ENCODE measurements at regions of chr21 and their contacts with region 1.

Region 1: GRCh38 chr21:21163904-21164303 is 165.7 kb downstream of the NCAM2 start:
- DNase-seq: peak; percentile 38 to 48
- H3K4me3 ChIP-seq: no peak overlapping the region
- H3K4me3 Mint-ChIP-seq: no peak overlapping the region
- H3K27ac Mint-ChIP-seq: no peak overlapping the region
- H3K4me1 ChIP-seq: no peaks in the 10 kb centered on the region
- H3K4me1 Mint-ChIP-seq: no peaks in the 10 kb centered on the region
- H3K27me3 ChIP-seq: no peaks in the 10 kb centered on the region
- H3K27me3 Mint-ChIP-seq: no peaks in the 10 kb centered on the region
- CTCF ChIP-seq: peak; percentile 52 to 56

Region 2: GRCh38 chr21:20999659-21000058 is 164.2 kb before region 1 on chr21:
- CTCF ChIA-PET with region 1: no interaction called
- POLR2A ChIA-PET with region 1: no interaction called
- intact Hi-C with region 1: loop called (anchors 5 kb)
- DNase-seq: peak in 1 of 2 experiments; percentile 42
- H3K4me3 ChIP-seq: no peak overlapping the region
- H3K4me3 Mint-ChIP-seq: no peak overlapping the region
- H3K27ac Mint-ChIP-seq: no peak overlapping the region
- H3K4me1 ChIP-seq: no peaks in the 10 kb centered on the region
- H3K4me1 Mint-ChIP-seq: no peaks in the 10 kb centered on the region
- H3K27me3 ChIP-seq: no peaks in the 10 kb centered on the region
- H3K27me3 Mint-ChIP-seq: peaks cover 14% of the 10 kb centered on the region
- CTCF ChIP-seq: peak; percentile 61 to 63

Region 3: GRCh38 chr21:21688875-21689274 is 525.0 kb after region 1 on chr21:
- CTCF ChIA-PET with region 1: no interaction called
- POLR2A ChIA-PET with region 1: no interaction called
- intact Hi-C with region 1: loop called (anchors 2 kb)
- DNase-seq: peak; percentile 9 to 34
- H3K4me3 ChIP-seq: no peak overlapping the region
- H3K4me3 Mint-ChIP-seq: no peak overlapping the region
- H3K27ac Mint-ChIP-seq: no peak overlapping the region
- H3K4me1 ChIP-seq: no peaks in the 10 kb centered on the region
- H3K4me1 Mint-ChIP-seq: no peaks in the 10 kb centered on the region
- H3K27me3 ChIP-seq: no peaks in the 10 kb centered on the region
- H3K27me3 Mint-ChIP-seq: no peaks in the 10 kb centered on the region
- CTCF ChIP-seq: peak; percentile 21 to 23

Region 4: DNA sequence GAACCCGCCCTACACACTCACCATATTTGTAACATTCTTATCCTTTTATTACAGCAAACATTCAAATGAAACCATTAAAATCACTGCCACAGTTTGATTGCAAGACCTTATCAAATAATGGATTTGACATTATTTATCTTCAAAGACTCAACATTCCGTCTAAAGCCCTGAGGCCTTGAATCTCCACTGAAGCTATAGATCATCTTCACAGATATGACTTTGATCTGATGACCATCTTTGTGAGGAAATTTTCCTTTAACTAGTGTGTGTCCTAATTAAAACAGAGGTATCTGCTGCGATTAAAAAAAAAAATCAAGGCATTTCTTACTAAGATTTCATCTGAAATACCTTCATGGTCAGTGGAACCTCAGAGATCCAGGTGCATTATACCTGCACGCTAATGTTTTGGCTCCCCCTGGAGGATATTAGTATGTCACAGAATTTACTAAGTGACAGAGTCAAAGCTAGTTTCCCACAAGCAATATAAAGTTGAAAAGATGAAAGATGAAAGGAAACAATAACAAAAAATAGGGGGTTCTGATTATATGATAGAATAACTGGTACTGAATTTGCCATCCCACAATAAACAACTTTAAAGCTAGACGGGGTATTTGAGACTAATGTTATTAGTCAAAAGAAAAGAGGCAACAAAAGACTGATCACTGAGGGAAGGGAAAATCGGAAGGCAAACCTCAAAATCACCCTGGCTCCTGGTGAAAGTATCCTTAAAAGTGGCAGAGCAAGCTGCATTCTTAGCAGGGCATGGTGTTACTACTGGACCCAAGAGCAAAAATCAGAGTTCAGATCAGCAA is 757.7 kb after region 1 on chr21:
- CTCF ChIA-PET with region 1: no interaction called
- POLR2A ChIA-PET with region 1: no interaction called
- intact Hi-C with region 1: loop called (anchors 1 kb)
- DNase-seq: peak in 1 of 2 experiments; percentile 43
- H3K4me3 ChIP-seq: no peak overlapping the region
- H3K4me3 Mint-ChIP-seq: no peak overlapping the region
- H3K27ac Mint-ChIP-seq: no peak overlapping the region
- H3K4me1 ChIP-seq: no peaks in the 10 kb centered on the region
- H3K4me1 Mint-ChIP-seq: peaks cover 7% of the 10 kb centered on the region
- H3K27me3 ChIP-seq: no peaks in the 10 kb centered on the region
- H3K27me3 Mint-ChIP-seq: peaks cover 2% of the 10 kb centered on the region
- CTCF ChIP-seq: peak; percentile 58 to 62

Region 5: GRCh38 chr21:22791986-22792560 is 1628.2 kb after region 1 on chr21:
- CTCF ChIA-PET with region 1: no interaction called
- POLR2A ChIA-PET with region 1: no interaction called
- intact Hi-C with region 1: loop called (anchors 1 kb)
- DNase-seq: peak in 1 of 2 experiments; percentile 40
- H3K4me3 ChIP-seq: no peak overlapping the region
- H3K4me3 Mint-ChIP-seq: no peak overlapping the region
- H3K27ac Mint-ChIP-seq: no peak overlapping the region
- H3K4me1 ChIP-seq: no peaks in the 10 kb centered on the region
- H3K4me1 Mint-ChIP-seq: no peaks in the 10 kb centered on the region
- H3K27me3 ChIP-seq: no peaks in the 10 kb centered on the region
- H3K27me3 Mint-ChIP-seq: no peaks in the 10 kb centered on the region
- CTCF ChIP-seq: peak; percentile 55 to 59